ENCODE measurements at regions of chr4 and their contacts with region 1.

Region 1: DNA sequence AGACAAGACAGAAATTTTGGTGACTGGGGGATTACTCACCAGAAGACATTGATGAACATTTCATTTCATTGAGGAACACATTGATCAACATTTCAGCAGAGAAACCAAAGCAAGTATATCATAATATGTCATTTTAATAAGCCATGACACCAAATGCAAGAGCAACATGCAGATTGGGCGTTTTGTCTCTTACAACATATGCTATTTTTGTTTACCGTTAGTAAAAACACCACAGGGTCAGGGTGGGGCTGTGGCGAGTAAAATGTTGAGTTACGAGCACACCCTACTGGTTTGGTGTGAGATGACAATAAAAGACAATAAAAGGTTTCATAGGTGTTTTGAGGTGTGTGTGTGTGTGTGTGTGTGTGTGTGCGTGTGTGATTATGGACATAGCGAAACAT is 294.5 kb downstream of the PDGFC start:
- DNase-seq: peak; percentile 64
- ATAC-seq: peak; percentile 80
- H3K4me3 ChIP-seq: no peak overlapping the region
- H3K27ac ChIP-seq: no peak overlapping the region
- H3K4me1 ChIP-seq: peaks cover 0 to 19% of the 10 kb centered on the region in 2 experiments; a peak in 2 of 4 replicates
- H3K27me3 ChIP-seq: no peaks in the 10 kb centered on the region
- CTCF ChIP-seq: peak; percentile 39 to 63 (median 63); a peak in 4 of 6 replicates
- POLR2A ChIP-seq: no peak
- RAD21 ChIP-seq: peak; percentile 82

Region 2: DNA sequence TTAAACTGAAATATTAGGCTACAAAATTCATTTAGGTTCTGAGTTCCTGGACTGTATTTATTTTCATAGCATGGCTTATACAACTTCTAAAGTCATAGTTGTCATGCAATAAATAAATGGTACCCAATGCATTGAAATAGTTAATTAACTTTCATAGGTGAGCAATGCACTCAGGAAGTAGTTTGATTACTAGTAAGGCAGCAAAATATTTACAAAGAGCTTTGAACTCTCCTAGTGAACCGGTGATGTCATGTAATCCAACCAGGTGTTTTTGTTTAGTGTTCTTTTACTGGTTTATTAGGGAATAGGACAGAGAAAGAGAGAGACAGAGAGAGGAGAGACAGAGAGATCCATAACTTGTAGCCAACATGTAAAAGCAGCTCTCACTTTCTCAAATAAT is 494.9 kb before region 1 on chr4:
- CTCF ChIA-PET with region 1: no interaction called
- POLR2A ChIA-PET with region 1: no interaction called
- RAD21 ChIA-PET with region 1: no interaction called
- intact Hi-C with region 1: no loop called
- DNase-seq: no peak
- ATAC-seq: no peak
- H3K4me3 ChIP-seq: no peak overlapping the region
- H3K27ac ChIP-seq: no peak overlapping the region
- H3K4me1 ChIP-seq: no peaks in the 10 kb centered on the region
- H3K27me3 ChIP-seq: no peaks in the 10 kb centered on the region
- CTCF ChIP-seq: no peak
- POLR2A ChIP-seq: no peak
- RAD21 ChIP-seq: no peak

Region 3: DNA sequence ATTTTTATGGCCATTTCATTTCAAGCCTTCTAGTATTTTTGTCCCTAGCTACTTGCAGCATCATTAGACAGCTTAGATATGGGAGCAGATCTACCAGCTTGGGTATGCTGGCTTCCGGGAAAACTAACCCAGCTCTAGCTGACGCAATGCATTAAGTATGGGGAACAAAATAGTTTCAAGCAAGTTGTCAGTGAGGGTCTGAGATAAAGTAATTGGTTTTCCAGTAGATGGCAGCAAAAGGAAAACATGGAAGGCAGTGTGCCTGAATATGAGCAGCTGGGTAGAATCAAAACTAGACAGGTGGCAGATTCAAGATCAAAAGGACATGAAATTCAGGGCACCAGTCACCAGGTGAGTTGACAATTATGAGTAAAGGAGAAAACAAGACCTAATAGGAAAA is 382.6 kb before region 1 on chr4:
- CTCF ChIA-PET with region 1: no interaction called
- POLR2A ChIA-PET with region 1: no interaction called
- RAD21 ChIA-PET with region 1: no interaction called
- intact Hi-C with region 1: loop called (anchors 10 kb)
- DNase-seq: peak; percentile 76
- ATAC-seq: peak; percentile 96
- H3K4me3 ChIP-seq: no peak overlapping the region
- H3K27ac ChIP-seq: no peak overlapping the region
- H3K4me1 ChIP-seq: peaks cover 10 to 15% of the 10 kb centered on the region in 2 experiments; a peak in 3 of 4 replicates
- H3K27me3 ChIP-seq: no peaks in the 10 kb centered on the region
- CTCF ChIP-seq: peak; percentile 43 to 56 (median 51); a peak in 5 of 6 replicates
- POLR2A ChIP-seq: no peak
- RAD21 ChIP-seq: peak; percentile 84

Region 4: DNA sequence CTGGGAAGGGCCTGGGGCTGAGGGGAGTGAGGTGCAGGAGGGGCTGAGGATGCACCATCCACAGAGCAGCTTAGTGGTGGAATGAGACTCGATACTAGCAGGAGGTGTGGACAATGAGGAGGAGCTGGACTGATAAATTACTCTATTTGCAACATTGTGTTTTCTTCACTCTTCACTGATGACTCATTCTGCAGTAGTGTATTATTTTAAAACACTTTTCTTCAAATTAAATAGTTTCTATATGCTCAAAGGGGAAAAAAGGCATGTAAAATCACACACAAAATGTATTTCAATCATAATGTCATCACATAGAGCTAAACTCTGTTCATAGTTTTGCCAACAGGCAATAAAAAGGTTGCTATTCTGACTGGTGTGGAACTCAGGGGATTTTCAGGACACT is 256.5 kb before region 1 on chr4:
- CTCF ChIA-PET with region 1: no interaction called
- POLR2A ChIA-PET with region 1: no interaction called
- RAD21 ChIA-PET with region 1: no interaction called
- intact Hi-C with region 1: no loop called
- DNase-seq: no peak
- ATAC-seq: no peak
- H3K4me3 ChIP-seq: no peak overlapping the region
- H3K27ac ChIP-seq: no peak overlapping the region
- H3K4me1 ChIP-seq: no peaks in the 10 kb centered on the region
- H3K27me3 ChIP-seq: no peaks in the 10 kb centered on the region
- CTCF ChIP-seq: no peak
- POLR2A ChIP-seq: no peak
- RAD21 ChIP-seq: no peak

Region 5: GRCh38 chr4:156763511-156763910 is 86.4 kb after region 1 on chr4:
- CTCF ChIA-PET with region 1: no interaction called
- POLR2A ChIA-PET with region 1: no interaction called
- RAD21 ChIA-PET with region 1: no interaction called
- intact Hi-C with region 1: no loop called
- DNase-seq: no peak
- ATAC-seq: no peak
- H3K4me3 ChIP-seq: no peak overlapping the region
- H3K27ac ChIP-seq: peak overlapping the region; percentile 44; the same call in 1 of the 2 replicates
- H3K4me1 ChIP-seq: peaks cover 0 to 8% of the 10 kb centered on the region in 2 experiments; a peak in 3 of 4 replicates
- H3K27me3 ChIP-seq: no peaks in the 10 kb centered on the region
- CTCF ChIP-seq: no peak
- POLR2A ChIP-seq: no peak
- RAD21 ChIP-seq: no peak

Measured in HCT116 (cell line).